MCF 10A (cell line): ENCODE measurements at regions of chr1 and their contacts with region 1.

Region 1: GRCh38 chr1:233113009-233113879 is 162.8 kb downstream of the NTPCR start:
- DNase-seq: peak; percentile 100
- H3K4me3 Mint-ChIP-seq: peak overlapping the region; percentile 62
- H3K27ac Mint-ChIP-seq: peak overlapping the region; percentile 90
- H3K4me1 Mint-ChIP-seq: peaks cover 63% of the 10 kb centered on the region
- H3K27me3 Mint-ChIP-seq: no peaks in the 10 kb centered on the region
- CTCF ChIP-seq: no peak

Region 2: DNA sequence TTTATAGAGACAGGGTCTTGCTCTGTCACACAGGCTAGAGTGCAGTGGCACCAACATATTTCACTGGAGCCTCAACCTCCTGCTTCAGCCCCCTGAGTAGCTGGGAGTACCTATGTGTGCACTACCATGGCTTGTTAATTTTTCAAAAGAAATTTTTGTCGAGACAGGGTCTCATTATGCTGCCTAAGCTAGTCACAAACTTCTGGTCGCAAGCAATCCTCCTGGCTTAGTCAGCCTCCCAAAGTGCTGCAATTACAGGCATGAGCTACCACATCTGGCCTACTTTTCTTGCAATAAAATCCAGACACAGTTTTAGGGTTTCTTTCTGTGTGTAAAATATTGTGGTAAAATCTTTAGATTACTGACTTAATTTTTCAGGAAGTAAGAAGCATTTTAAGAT is 190.8 kb before region 1 on chr1:
- CTCF ChIA-PET with region 1: no interaction called
- POLR2A ChIA-PET with region 1: no interaction called
- intact Hi-C with region 1: no loop called
- DNase-seq: no peak
- H3K4me3 Mint-ChIP-seq: no peak overlapping the region
- H3K27ac Mint-ChIP-seq: no peak overlapping the region
- H3K4me1 Mint-ChIP-seq: no peaks in the 10 kb centered on the region
- H3K27me3 Mint-ChIP-seq: no peaks in the 10 kb centered on the region
- CTCF ChIP-seq: no peak

Region 3: DNA sequence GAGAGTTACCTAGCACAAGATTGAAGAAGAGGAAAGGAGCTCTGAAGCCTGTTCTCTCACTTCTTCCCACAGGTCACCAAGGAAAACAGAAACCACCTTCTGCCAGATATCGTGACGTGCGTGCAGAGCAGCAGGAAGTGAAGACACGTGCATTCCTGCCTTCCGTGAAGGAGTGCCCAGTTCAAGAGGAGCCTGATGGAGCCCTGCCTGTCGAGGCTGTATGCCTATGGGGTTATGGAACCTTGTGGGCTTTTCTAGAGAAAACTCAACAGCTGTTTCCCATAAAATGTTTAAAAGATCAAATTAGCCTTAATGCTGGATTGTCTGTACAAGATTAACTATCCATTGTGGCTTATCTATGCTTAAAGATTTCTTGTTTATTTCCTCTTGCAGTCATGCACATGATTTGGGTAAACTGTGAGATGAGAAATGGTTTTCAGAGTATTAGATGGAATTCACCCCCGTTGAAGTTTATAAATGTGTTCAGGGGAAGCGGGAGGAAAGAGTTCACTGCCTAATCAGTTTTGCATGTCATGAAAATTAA is 135.1 kb before region 1 on chr1:
- CTCF ChIA-PET with region 1: no interaction called
- POLR2A ChIA-PET with region 1: no interaction called
- intact Hi-C with region 1: no loop called
- DNase-seq: no peak
- H3K4me3 Mint-ChIP-seq: no peak overlapping the region
- H3K27ac Mint-ChIP-seq: no peak overlapping the region
- H3K4me1 Mint-ChIP-seq: peaks cover 12% of the 10 kb centered on the region
- H3K27me3 Mint-ChIP-seq: no peaks in the 10 kb centered on the region
- CTCF ChIP-seq: no peak

Region 4: GRCh38 chr1:233078396-233078795 is 34.8 kb before region 1 on chr1:
- CTCF ChIA-PET with region 1: interaction called, 3 read pairs
- POLR2A ChIA-PET with region 1: interaction called, 13 read pairs
- intact Hi-C with region 1: loop called (anchors 5 kb)
- DNase-seq: no peak
- H3K4me3 Mint-ChIP-seq: no peak overlapping the region
- H3K27ac Mint-ChIP-seq: no peak overlapping the region
- H3K4me1 Mint-ChIP-seq: peaks cover 7% of the 10 kb centered on the region
- H3K27me3 Mint-ChIP-seq: no peaks in the 10 kb centered on the region
- CTCF ChIP-seq: no peak

Region 5: DNA sequence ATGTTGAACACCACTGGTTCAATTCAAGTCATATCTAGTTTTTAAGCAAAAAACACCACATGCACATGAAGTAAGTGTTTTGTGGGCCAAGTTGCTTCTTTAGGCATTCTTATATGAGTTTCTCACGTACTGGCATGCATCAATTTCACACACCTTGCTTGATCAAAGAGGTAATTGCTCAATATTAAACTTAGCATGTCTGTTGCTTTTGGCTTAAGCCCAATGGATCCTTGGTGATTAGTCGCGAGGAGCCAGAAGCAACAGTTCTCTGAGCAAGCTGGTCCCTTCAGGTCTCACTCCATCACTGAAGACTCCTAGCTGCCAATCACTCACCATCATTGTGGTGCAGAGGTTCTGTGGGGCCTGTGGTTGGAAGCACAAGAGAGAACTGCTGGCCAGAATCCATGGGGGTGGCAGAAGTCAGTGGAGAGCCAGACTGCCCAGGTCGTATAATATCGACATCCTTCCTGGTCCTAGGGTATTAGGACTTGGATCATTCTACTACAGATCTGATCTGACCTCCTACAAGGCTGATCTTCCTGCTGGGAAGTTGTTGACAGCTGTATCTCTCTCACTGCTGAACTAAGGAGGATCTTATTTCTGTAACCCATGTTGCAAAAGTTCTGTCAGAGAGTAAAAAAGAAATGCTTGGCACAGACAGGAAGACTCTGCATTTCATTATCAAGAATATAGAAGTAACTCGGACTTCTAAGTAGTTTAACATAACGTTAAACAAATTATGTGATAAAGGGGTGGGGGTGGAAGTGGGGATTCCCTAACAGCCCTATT is 22.3 kb before region 1 on chr1:
- CTCF ChIA-PET with region 1: no interaction called
- POLR2A ChIA-PET with region 1: interaction called, 31 read pairs
- intact Hi-C with region 1: no loop called
- DNase-seq: peak; percentile 95
- H3K4me3 Mint-ChIP-seq: no peak overlapping the region
- H3K27ac Mint-ChIP-seq: peak overlapping the region; percentile 47
- H3K4me1 Mint-ChIP-seq: peaks cover 12% of the 10 kb centered on the region
- H3K27me3 Mint-ChIP-seq: no peaks in the 10 kb centered on the region
- CTCF ChIP-seq: no peak

Region 6: GRCh38 chr1:233097959-233098580 is 15.2 kb before region 1 on chr1:
- CTCF ChIA-PET with region 1: no interaction called
- POLR2A ChIA-PET with region 1: interaction called, 24 read pairs
- intact Hi-C with region 1: no loop called
- DNase-seq: peak; percentile 17
- H3K4me3 Mint-ChIP-seq: no peak overlapping the region
- H3K27ac Mint-ChIP-seq: no peak overlapping the region
- H3K4me1 Mint-ChIP-seq: peaks cover 16% of the 10 kb centered on the region
- H3K27me3 Mint-ChIP-seq: no peaks in the 10 kb centered on the region
- CTCF ChIP-seq: no peak

Region 7: DNA sequence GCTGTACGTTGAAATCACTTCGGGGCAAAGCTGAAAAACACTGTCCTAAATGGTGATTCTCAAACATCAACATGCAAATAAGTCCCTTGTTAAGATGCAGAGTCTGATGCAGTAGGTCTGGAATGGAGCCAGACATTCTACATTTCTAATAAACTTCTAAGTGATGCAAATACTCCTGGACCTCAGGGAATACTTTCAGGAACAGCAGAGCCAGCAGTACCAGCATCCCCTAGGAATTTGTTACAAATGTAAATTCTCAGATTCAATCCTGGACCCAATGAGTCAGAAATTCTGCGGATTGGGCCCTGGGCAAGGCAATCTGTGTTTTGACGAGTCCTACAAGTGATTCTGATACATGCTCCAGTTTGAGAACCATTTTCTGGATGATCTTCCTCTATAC is 30.0 kb after region 1 on chr1:
- CTCF ChIA-PET with region 1: no interaction called
- POLR2A ChIA-PET with region 1: interaction called, 10 read pairs
- intact Hi-C with region 1: no loop called
- DNase-seq: no peak
- H3K4me3 Mint-ChIP-seq: no peak overlapping the region
- H3K27ac Mint-ChIP-seq: no peak overlapping the region
- H3K4me1 Mint-ChIP-seq: no peaks in the 10 kb centered on the region
- H3K27me3 Mint-ChIP-seq: no peaks in the 10 kb centered on the region
- CTCF ChIP-seq: no peak

Region 8: GRCh38 chr1:233183226-233184020 is 70.2 kb after region 1 on chr1:
- CTCF ChIA-PET with region 1: interaction called, 5 read pairs
- POLR2A ChIA-PET with region 1: interaction called, 15 read pairs
- intact Hi-C with region 1: no loop called
- DNase-seq: no peak
- H3K4me3 Mint-ChIP-seq: no peak overlapping the region
- H3K27ac Mint-ChIP-seq: no peak overlapping the region
- H3K4me1 Mint-ChIP-seq: peaks cover 22% of the 10 kb centered on the region
- H3K27me3 Mint-ChIP-seq: no peaks in the 10 kb centered on the region
- CTCF ChIP-seq: no peak

Region 9: DNA sequence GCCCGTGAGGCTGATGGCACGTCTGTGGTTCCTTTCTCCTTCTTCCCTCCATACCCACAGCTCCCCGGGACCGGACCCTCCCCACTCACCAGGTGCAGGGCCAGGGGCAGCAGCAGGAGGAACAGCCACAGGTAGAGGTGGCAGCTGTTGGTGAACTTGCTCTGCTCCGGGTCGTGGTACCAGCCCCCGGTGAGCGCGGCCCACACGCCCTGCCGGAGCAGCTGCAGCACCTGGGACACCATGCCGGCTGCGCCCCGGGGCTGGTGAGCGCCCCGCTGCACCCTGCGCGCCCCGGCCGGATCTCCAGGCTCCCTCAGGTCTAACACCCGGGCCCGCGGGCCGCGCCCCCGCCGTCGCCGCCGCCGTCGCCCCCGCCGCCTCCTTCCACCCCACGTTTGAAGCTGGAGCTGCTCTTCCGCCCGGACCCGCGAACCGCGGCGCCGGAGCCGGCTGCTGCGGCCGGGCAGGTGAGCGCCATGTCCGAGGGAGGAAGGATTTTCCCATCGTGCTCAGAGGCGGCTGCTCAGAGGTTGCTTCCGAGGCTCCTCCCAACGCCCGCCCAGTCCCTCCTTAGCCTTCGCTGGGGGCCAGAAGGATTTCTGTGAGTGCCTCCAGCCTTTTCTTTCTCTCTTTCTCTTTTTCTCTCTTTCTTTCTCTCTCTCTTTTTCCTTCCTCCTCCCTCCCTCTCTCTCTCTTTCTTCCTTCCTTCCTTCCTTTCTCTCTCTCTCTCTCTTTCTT is 182.2 kb after region 1 on chr1 and contains the start of gene PCNX2:
- CTCF ChIA-PET with region 1: no interaction called
- POLR2A ChIA-PET with region 1: interaction called, 13 read pairs
- intact Hi-C with region 1: loop called (anchors 1 kb)
- DNase-seq: peak; percentile 88
- H3K4me3 Mint-ChIP-seq: peak within 1 kb of the TSS; percentile 81
- H3K27ac Mint-ChIP-seq: peak within 1 kb of the TSS; percentile 68
- H3K4me1 Mint-ChIP-seq: peaks cover 28% of the 10 kb centered on the region
- H3K27me3 Mint-ChIP-seq: no peaks in the 10 kb centered on the region
- CTCF ChIP-seq: no peak
- total RNA-seq, gene PCNX2: 80.5 and 85.3 TPM in 2 replicates